ENCODE measurements at regions of chr12 and their contacts with region 1.

Region 1: GRCh38 chr12:3641428-3642018 is 111.4 kb downstream of the CRACR2A start:
- DNase-seq: no peak
- H3K4me3 Mint-ChIP-seq: no peak overlapping the region
- H3K27ac Mint-ChIP-seq: no peak overlapping the region
- H3K4me1 Mint-ChIP-seq: no peaks in the 10 kb centered on the region
- H3K27me3 Mint-ChIP-seq: no peaks in the 10 kb centered on the region

Region 2: GRCh38 chr12:3571724-3572123 is 69.8 kb before region 1 on chr12:
- intact Hi-C with region 1: no loop called
- DNase-seq: no peak
- H3K4me3 Mint-ChIP-seq: no peak overlapping the region
- H3K27ac Mint-ChIP-seq: no peak overlapping the region
- H3K4me1 Mint-ChIP-seq: peaks cover 2% of the 10 kb centered on the region
- H3K27me3 Mint-ChIP-seq: peaks cover 19% of the 10 kb centered on the region

Region 3: DNA sequence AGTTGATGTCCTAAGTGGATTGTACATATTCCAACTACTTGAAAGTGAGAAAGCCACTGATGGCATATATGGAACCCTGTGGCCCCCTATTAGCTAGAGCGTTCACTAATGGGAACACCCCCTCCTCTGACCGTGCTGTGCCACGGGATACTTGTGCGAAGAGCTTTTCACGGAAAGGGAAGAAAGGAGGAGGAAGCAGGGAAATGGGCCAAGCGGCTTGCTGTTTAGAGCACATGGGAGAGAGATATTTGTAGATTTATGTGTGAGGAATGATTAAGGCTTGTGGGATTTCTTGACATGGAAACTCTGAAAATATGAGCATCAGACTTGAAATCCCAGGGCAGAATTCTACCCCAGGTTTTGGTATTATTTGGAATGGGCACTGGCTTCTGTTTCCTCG is 20.7 kb before region 1 on chr12:
- intact Hi-C with region 1: loop called (anchors 2 kb)
- DNase-seq: no peak
- H3K4me3 Mint-ChIP-seq: no peak overlapping the region
- H3K27ac Mint-ChIP-seq: no peak overlapping the region
- H3K4me1 Mint-ChIP-seq: peaks cover 24% of the 10 kb centered on the region
- H3K27me3 Mint-ChIP-seq: no peaks in the 10 kb centered on the region